AG04449 (cell line): ENCODE measurements at regions of chr19 and their contacts with region 1.

Region 1: GRCh38 chr19:29731331-29731850 is 16.3 kb upstream of the C19orf12 start:
- DNase-seq: no peak
- H3K4me3 ChIP-seq: no peak overlapping the region
- CTCF ChIP-seq: no peak

Region 2: GRCh38 chr19:29741786-29742185 is 10.4 kb after region 1 on chr19:
- CTCF ChIA-PET with region 1: interaction called, 16 read pairs
- POLR2A ChIA-PET with region 1: no interaction called
- DNase-seq: no peak
- H3K4me3 ChIP-seq: no peak overlapping the region
- CTCF ChIP-seq: no peak

Region 3: DNA sequence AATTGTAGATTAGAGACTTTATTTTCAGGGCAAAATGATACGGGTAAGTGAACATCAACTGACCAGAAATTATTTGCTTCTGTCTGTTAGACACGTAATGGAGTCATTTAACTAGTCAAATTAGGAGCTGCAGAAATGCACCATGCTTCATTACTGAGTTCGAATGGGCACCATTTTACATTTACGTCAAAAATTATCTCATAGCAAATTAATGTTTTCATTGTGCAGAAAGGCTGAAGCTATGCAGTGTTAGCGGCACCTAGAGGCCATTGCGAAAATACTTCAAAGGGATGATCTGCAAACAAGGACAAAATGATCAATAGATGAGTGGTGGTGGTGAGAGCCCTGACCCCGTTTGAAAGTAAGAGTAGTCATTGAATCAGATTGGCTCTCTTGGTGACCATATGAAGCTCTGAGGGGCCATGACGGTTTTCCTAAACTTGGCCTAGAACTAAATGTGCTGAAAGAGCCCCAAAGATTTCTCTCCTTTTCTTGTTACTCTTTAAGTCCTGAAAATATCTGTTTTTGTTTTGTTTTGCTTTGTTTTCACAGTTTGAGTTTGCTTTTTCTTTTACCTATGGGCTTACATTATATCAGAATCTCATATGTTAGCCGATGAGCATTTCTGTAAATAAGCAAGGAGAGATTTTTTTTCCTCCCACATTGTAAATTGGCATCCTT is 918.7 kb after region 1 on chr19:
- CTCF ChIA-PET with region 1: interaction called, 10 read pairs
- POLR2A ChIA-PET with region 1: no interaction called
- DNase-seq: peak; percentile 12
- H3K4me3 ChIP-seq: no peak overlapping the region
- CTCF ChIP-seq: peak; percentile 70